Tibial artery (tissue), 4 donors: ENCODE measurements at regions of chr9 and their contacts with region 1.

Region 1: GRCh38 chr9:23172979-23173637 is 652.9 kb downstream of the ELAVL2 start:
- DNase-seq: no peak
- H3K4me3 ChIP-seq: no peak overlapping the region
- H3K27ac ChIP-seq: no peak overlapping the region
- H3K4me1 ChIP-seq: no peaks in the 10 kb centered on the region
- H3K27me3 ChIP-seq: no peaks in the 10 kb centered on the region
- CTCF ChIP-seq: no peak

Region 2: GRCh38 chr9:23123048-23123632 is 50.0 kb before region 1 on chr9:
- intact Hi-C with region 1: loop called (anchors 10 kb)
- DNase-seq: no peak
- H3K4me3 ChIP-seq: no peak overlapping the region
- H3K27ac ChIP-seq: no peak overlapping the region
- H3K4me1 ChIP-seq: no peaks in the 10 kb centered on the region
- H3K27me3 ChIP-seq: no peaks in the 10 kb centered on the region
- CTCF ChIP-seq: peak; percentile 30 to 40

Region 3: GRCh38 chr9:23145467-23145866 is 27.6 kb before region 1 on chr9:
- intact Hi-C with region 1: no loop called
- DNase-seq: no peak
- H3K4me3 ChIP-seq: no peak overlapping the region
- H3K27ac ChIP-seq: no peak overlapping the region
- H3K4me1 ChIP-seq: no peaks in the 10 kb centered on the region
- H3K27me3 ChIP-seq: no peaks in the 10 kb centered on the region
- CTCF ChIP-seq: no peak

Region 4: GRCh38 chr9:23278561-23278960 is 105.5 kb after region 1 on chr9:
- intact Hi-C with region 1: no loop called
- DNase-seq: no peak
- H3K4me3 ChIP-seq: no peak overlapping the region
- H3K27ac ChIP-seq: no peak overlapping the region
- H3K4me1 ChIP-seq: no peaks in the 10 kb centered on the region
- H3K27me3 ChIP-seq: no peaks in the 10 kb centered on the region
- CTCF ChIP-seq: no peak

Region 5: GRCh38 chr9:24059651-24060050 is 886.5 kb after region 1 on chr9:
- intact Hi-C with region 1: no loop called
- DNase-seq: no peak
- H3K4me3 ChIP-seq: no peak overlapping the region
- H3K27ac ChIP-seq: no peak overlapping the region
- H3K4me1 ChIP-seq: no peaks in the 10 kb centered on the region
- H3K27me3 ChIP-seq: no peaks in the 10 kb centered on the region
- CTCF ChIP-seq: no peak